Caco-2 (cell line): ENCODE measurements at regions of chr17 and their contacts with region 1.

Region 1: GRCh38 chr17:38868817-38869525 is 887 bp upstream of the LASP1 start:
- DNase-seq: peak; percentile 92 to 95
- H3K4me3 ChIP-seq: peak overlapping the region; percentile 79
- H3K4me3 Mint-ChIP-seq: peak overlapping the region; percentile 86
- H3K27ac Mint-ChIP-seq: peak overlapping the region; percentile 92
- H3K4me1 ChIP-seq: peaks cover 28% of the 10 kb centered on the region
- H3K4me1 Mint-ChIP-seq: peaks cover 11% of the 10 kb centered on the region
- H3K27me3 ChIP-seq: no peaks in the 10 kb centered on the region
- H3K27me3 Mint-ChIP-seq: no peaks in the 10 kb centered on the region
- CTCF ChIP-seq: peak in 1 of 2 experiments; percentile 20

Region 2: GRCh38 chr17:38799378-38800236 is 69.4 kb before region 1 on chr17 and contains the start of gene PIP4K2B:
- CTCF ChIA-PET with region 1: no interaction called
- POLR2A ChIA-PET with region 1: no interaction called
- intact Hi-C with region 1: loop called (anchors 5 kb)
- DNase-seq: peak; percentile 98 to 99
- H3K4me3 ChIP-seq: peak within 1 kb of the TSS; percentile 97
- H3K4me3 Mint-ChIP-seq: peak within 1 kb of the TSS; percentile 93
- H3K27ac Mint-ChIP-seq: peak within 1 kb of the TSS; percentile 91
- H3K4me1 ChIP-seq: peaks cover 10% of the 10 kb centered on the region
- H3K4me1 Mint-ChIP-seq: peaks cover 28% of the 10 kb centered on the region
- H3K27me3 ChIP-seq: no peaks in the 10 kb centered on the region
- H3K27me3 Mint-ChIP-seq: no peaks in the 10 kb centered on the region
- CTCF ChIP-seq: no peak
- total RNA-seq, gene PIP4K2B: 39.6 and 42.3 TPM in 2 replicates

Region 3: GRCh38 chr17:38853292-38854219 is 15.4 kb before region 1 on chr17 and contains the start of gene RPL23:
- CTCF ChIA-PET with region 1: interaction called, 21 read pairs
- POLR2A ChIA-PET with region 1: interaction called, 42 read pairs
- intact Hi-C with region 1: loop called (anchors 1 kb)
- DNase-seq: peak; percentile 95 to 96
- H3K4me3 ChIP-seq: peak within 1 kb of the TSS; percentile 62
- H3K4me3 Mint-ChIP-seq: peak within 1 kb of the TSS; percentile 100
- H3K27ac Mint-ChIP-seq: peak within 1 kb of the TSS; percentile 100
- H3K4me1 ChIP-seq: peaks cover 10% of the 10 kb centered on the region; the same call in 1 of the 2 replicates
- H3K4me1 Mint-ChIP-seq: peaks cover 22% of the 10 kb centered on the region
- H3K27me3 ChIP-seq: no peaks in the 10 kb centered on the region
- H3K27me3 Mint-ChIP-seq: no peaks in the 10 kb centered on the region
- CTCF ChIP-seq: no peak
- total RNA-seq, gene RPL23: 2,216 and 2,327 TPM in 2 replicates

Region 4: DNA sequence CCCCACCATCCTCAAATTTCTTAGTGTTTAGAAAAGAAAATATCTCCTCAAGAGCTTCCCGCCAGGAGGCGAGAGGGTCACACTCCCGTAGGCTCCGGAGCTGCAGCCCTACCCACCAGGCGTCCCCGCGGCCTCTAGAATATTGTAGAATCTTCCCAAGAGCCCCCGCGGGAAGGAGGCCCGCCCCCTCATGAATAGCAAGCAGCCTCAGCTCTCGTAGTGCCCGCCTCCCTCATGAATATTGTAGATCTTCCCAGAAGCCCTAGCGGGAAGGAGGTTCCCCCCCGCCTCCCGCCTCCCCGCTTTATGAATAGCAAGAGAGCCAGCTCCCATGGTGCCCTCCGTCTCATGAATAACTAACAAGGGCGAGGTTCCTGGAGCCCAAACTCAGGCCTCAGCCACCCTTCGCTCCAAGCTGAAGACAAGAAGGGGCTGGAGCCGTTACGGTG is 98.3 kb after region 1 on chr17 and contains the start of gene FBXO47:
- CTCF ChIA-PET with region 1: interaction called, 6 read pairs
- POLR2A ChIA-PET with region 1: no interaction called
- intact Hi-C with region 1: loop called (anchors 5 kb)
- DNase-seq: peak; percentile 95 to 98
- H3K4me3 ChIP-seq: peak within 1 kb of the TSS; percentile 46
- H3K4me3 Mint-ChIP-seq: peak within 1 kb of the TSS; percentile 80
- H3K27ac Mint-ChIP-seq: peak within 1 kb of the TSS; percentile 84
- H3K4me1 ChIP-seq: no peaks in the 10 kb centered on the region
- H3K4me1 Mint-ChIP-seq: peaks cover 5% of the 10 kb centered on the region
- H3K27me3 ChIP-seq: no peaks in the 10 kb centered on the region
- H3K27me3 Mint-ChIP-seq: no peaks in the 10 kb centered on the region
- CTCF ChIP-seq: peak in 1 of 2 experiments; percentile 53
- total RNA-seq, gene FBXO47: not detected in 2 replicates

Region 5: DNA sequence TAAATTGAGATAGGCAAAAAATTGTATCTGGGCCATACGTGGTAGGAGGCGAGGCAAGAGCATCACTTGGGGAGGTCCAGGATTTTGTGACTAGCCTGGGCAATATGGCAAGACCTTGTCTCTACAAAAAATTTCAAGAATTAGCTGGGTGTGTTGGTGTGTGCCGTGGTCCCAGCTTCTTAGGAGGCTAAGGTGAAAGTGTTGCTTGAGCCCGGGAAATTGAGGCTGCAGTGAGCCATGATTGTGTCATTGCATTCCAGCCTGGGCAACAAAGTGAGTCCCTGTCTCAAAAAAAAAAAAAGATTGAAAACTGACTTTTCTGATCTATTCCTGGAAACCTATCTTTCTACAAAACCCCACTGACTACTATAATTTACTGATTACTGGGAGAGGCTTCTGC is 619.0 kb after region 1 on chr17:
- CTCF ChIA-PET with region 1: no interaction called
- POLR2A ChIA-PET with region 1: interaction called, 10 read pairs
- intact Hi-C with region 1: no loop called
- DNase-seq: no peak
- H3K4me3 ChIP-seq: no peak overlapping the region
- H3K4me3 Mint-ChIP-seq: no peak overlapping the region
- H3K27ac Mint-ChIP-seq: no peak overlapping the region
- H3K4me1 ChIP-seq: peaks cover 8% of the 10 kb centered on the region; the same call in 1 of the 2 replicates
- H3K4me1 Mint-ChIP-seq: no peaks in the 10 kb centered on the region
- H3K27me3 ChIP-seq: no peaks in the 10 kb centered on the region
- H3K27me3 Mint-ChIP-seq: no peaks in the 10 kb centered on the region
- CTCF ChIP-seq: no peak